ENCODE measurements at regions of chr5 and their contacts with region 1.

Region 1: GRCh38 chr5:40386289-40386688 is 293.4 kb upstream of the PTGER4 start:
- DNase-seq: peak; percentile 56
- H3K4me3 Mint-ChIP-seq: no peak overlapping the region
- H3K27ac Mint-ChIP-seq: peak overlapping the region; percentile 62
- H3K4me1 Mint-ChIP-seq: peaks cover 90% of the 10 kb centered on the region
- H3K27me3 Mint-ChIP-seq: no peaks in the 10 kb centered on the region

Region 2: DNA sequence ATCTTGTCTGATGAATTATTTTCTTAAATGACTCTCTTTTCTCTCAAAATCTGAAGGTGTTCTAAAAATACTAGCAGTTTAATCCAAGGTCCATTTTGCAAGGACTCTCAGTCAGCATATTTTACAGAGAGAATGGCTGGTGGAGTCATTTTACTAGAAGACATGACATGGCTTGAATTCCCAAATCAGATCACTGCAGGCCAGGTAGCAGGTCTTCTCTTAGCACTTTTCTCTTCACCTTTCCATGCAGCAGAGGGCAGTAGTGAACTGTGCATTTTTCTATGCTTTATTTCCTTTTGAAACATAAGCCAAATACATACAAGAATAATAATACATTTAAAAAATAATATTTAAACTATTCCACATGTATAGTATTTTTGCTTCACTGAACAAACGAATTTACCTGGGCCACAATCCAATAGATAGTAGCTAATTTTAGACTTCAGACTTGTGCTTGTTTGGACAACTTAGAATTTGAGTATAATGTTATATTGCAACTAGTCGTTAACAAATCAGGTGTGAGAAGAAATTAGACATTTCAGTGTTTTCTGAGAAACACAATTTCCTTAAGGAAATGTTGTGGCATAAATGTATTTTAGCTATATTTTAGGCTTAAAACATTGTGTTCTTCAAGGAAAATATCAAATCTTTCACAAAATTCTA is 672.1 kb before region 1 on chr5:
- CTCF ChIA-PET with region 1: no interaction called
- POLR2A ChIA-PET with region 1: no interaction called
- intact Hi-C with region 1: loop called (anchors 10 kb)
- DNase-seq: peak; percentile 29
- H3K4me3 Mint-ChIP-seq: no peak overlapping the region
- H3K27ac Mint-ChIP-seq: no peak overlapping the region
- H3K4me1 Mint-ChIP-seq: no peaks in the 10 kb centered on the region
- H3K27me3 Mint-ChIP-seq: no peaks in the 10 kb centered on the region

Region 3: GRCh38 chr5:40171971-40172370 is 214.3 kb before region 1 on chr5:
- CTCF ChIA-PET with region 1: no interaction called
- POLR2A ChIA-PET with region 1: no interaction called
- intact Hi-C with region 1: loop called (anchors 1 kb)
- DNase-seq: no peak
- H3K4me3 Mint-ChIP-seq: no peak overlapping the region
- H3K27ac Mint-ChIP-seq: no peak overlapping the region
- H3K4me1 Mint-ChIP-seq: peaks cover 16% of the 10 kb centered on the region
- H3K27me3 Mint-ChIP-seq: no peaks in the 10 kb centered on the region

Region 4: GRCh38 chr5:40277161-40277906 is 109.0 kb before region 1 on chr5:
- CTCF ChIA-PET with region 1: no interaction called
- POLR2A ChIA-PET with region 1: interaction called, 8 read pairs
- intact Hi-C with region 1: loop called (anchors 1 kb)
- DNase-seq: peak; percentile 63
- H3K4me3 Mint-ChIP-seq: peak overlapping the region; percentile 18
- H3K27ac Mint-ChIP-seq: peak overlapping the region; percentile 97
- H3K4me1 Mint-ChIP-seq: peaks cover 61% of the 10 kb centered on the region
- H3K27me3 Mint-ChIP-seq: no peaks in the 10 kb centered on the region

Region 5: DNA sequence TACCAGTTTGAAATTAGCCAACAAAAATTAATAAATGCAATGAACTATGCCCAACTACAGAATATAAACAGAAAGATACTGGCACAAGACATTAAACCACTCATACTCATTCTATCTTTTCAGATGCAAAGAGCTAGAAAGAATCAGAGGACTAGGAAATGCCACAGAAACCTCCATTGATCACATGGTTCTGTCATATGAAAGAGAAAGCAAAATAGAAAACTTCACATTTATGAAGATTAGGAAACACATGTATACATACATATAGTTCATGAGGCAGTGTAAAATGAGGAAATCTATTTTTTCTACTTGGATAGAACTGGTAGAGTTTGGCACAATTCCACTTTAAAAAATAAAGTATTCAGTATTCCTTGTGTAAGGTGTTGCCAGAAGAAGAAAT is 18.3 kb after region 1 on chr5:
- CTCF ChIA-PET with region 1: interaction called, 12 read pairs
- POLR2A ChIA-PET with region 1: interaction called, 39 read pairs
- intact Hi-C with region 1: loop called (anchors 1 kb)
- DNase-seq: no peak
- H3K4me3 Mint-ChIP-seq: no peak overlapping the region
- H3K27ac Mint-ChIP-seq: peak overlapping the region; percentile 99
- H3K4me1 Mint-ChIP-seq: peaks cover 90% of the 10 kb centered on the region
- H3K27me3 Mint-ChIP-seq: no peaks in the 10 kb centered on the region

Region 6: GRCh38 chr5:40486437-40487275 is 100.4 kb after region 1 on chr5:
- CTCF ChIA-PET with region 1: interaction called, 4 read pairs
- POLR2A ChIA-PET with region 1: interaction called, 6 read pairs
- intact Hi-C with region 1: loop called (anchors 1 kb)
- DNase-seq: peak; percentile 77
- H3K4me3 Mint-ChIP-seq: peak overlapping the region; percentile 7
- H3K27ac Mint-ChIP-seq: peak overlapping the region; percentile 84
- H3K4me1 Mint-ChIP-seq: peaks cover 81% of the 10 kb centered on the region
- H3K27me3 Mint-ChIP-seq: no peaks in the 10 kb centered on the region

Region 7: DNA sequence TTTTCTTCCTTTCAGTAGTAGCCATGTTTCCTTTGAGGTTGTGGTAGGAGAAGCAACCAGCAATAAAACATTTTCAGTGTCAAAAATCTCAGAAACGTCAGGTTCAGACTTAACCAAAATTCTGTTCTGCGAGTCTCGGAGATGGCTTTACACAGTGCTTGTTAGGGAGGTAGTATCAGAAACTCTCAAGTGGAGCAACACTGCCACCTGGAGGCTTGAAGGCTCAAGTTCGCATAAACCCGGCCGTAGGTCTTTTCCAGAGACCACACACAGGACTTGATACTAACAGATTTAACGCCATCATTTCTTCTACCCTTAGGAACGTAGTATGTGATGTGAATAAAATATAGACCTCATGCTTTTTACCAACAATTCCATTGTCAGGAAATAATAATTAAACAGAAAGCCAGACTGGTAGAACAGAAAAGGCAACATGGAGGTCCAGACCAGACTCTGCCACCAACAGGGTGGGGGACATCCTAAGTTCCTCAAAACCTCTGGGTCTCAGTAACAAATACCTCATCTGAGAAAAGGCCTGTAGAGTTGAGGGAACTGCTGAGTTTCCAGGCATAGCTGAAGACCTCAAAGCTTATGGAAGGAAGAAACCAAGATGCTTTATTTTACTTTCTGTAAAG is 302.0 kb after region 1 on chr5:
- CTCF ChIA-PET with region 1: interaction called, 6 read pairs
- POLR2A ChIA-PET with region 1: interaction called, 11 read pairs
- intact Hi-C with region 1: loop called (anchors 1 kb)
- DNase-seq: peak; percentile 91
- H3K4me3 Mint-ChIP-seq: peak overlapping the region; percentile 93
- H3K27ac Mint-ChIP-seq: peak overlapping the region; percentile 97
- H3K4me1 Mint-ChIP-seq: peaks cover 65% of the 10 kb centered on the region
- H3K27me3 Mint-ChIP-seq: no peaks in the 10 kb centered on the region

Measured in activated CD4-positive, alpha-beta memory T cell treated with anti-CD3 and anti-CD28 coated beads for 36 hours (primary cell).